ENCODE measurements at regions of chr3 and their contacts with region 1.

Region 1: GRCh38 chr3:73451306-73451944 is 173.3 kb downstream of the PDZRN3 start:
- DNase-seq: no peak
- H3K4me3 ChIP-seq: no peak overlapping the region
- H3K27ac ChIP-seq: no peak overlapping the region
- H3K4me1 ChIP-seq: peaks cover 13% of the 10 kb centered on the region
- H3K27me3 ChIP-seq: no peaks in the 10 kb centered on the region
- CTCF ChIP-seq: no peak
- EP300 ChIP-seq: no peak
- POLR2A ChIP-seq: no peak

Region 2: DNA sequence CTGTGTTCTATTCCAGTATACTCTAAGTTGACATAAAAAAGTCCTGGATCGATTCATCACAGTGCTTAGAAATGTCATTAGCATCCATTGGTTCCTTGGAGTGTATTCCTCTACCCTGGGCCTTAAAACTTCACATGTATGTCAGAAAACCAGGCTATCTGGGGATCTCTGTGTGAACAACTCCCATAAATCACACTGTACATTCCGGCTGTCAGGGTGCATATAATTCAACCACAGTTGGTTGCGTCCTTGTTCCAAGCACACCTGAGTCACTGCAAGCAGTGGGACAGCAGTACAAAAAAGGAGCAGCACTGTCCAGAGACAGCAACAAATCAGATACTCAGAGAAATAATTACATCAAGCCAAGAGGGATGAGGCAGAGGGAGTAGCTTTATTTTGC is 120.9 kb after region 1 on chr3:
- intact Hi-C with region 1: no loop called
- DNase-seq: no peak
- H3K4me3 ChIP-seq: no peak overlapping the region
- H3K27ac ChIP-seq: no peak overlapping the region
- H3K4me1 ChIP-seq: peaks cover 6% of the 10 kb centered on the region
- H3K27me3 ChIP-seq: no peaks in the 10 kb centered on the region
- CTCF ChIP-seq: no peak
- EP300 ChIP-seq: no peak
- POLR2A ChIP-seq: no peak

Region 3: GRCh38 chr3:73855813-73856514 is 404.5 kb after region 1 on chr3:
- intact Hi-C with region 1: loop called in 1 of 4 experiments (anchors 10 kb)
- DNase-seq: no peak
- H3K4me3 ChIP-seq: no peak overlapping the region
- H3K27ac ChIP-seq: no peak overlapping the region
- H3K4me1 ChIP-seq: no peaks in the 10 kb centered on the region
- H3K27me3 ChIP-seq: no peaks in the 10 kb centered on the region
- CTCF ChIP-seq: no peak
- EP300 ChIP-seq: no peak
- POLR2A ChIP-seq: no peak

Region 4: GRCh38 chr3:75089841-75090240 is 1638.4 kb after region 1 on chr3:
- intact Hi-C with region 1: no loop called
- DNase-seq: no peak
- H3K4me3 ChIP-seq: no peak overlapping the region
- H3K27ac ChIP-seq: no peak overlapping the region
- H3K4me1 ChIP-seq: no peaks in the 10 kb centered on the region
- H3K27me3 ChIP-seq: no peaks in the 10 kb centered on the region
- CTCF ChIP-seq: no peak
- EP300 ChIP-seq: no peak
- POLR2A ChIP-seq: no peak

Measured in ovary (tissue), 10 donors.